H1 (cell line): ENCODE measurements at regions of chr6 and their contacts with region 1.

Region 1: GRCh38 chr6:26223650-26224546 is 136.7 kb downstream of the HFE start:
- DNase-seq: no peak
- H3K4me3 ChIP-seq: peak overlapping the region; percentile 61 to 94 (median 76)
- H3K27ac ChIP-seq: peak overlapping the region; percentile 91
- H3K4me1 ChIP-seq: peaks cover 0 to 7% (median 3%) of the 10 kb centered on the region in 4 experiments; a peak in 5 of 7 replicates
- H3K27me3 ChIP-seq: no peaks in the 10 kb centered on the region
- CTCF ChIP-seq: no peak
- EP300 ChIP-seq: no peak
- POLR2A ChIP-seq: peak; percentile 48 to 76; a peak in 2 of 3 replicates
- RAD21 ChIP-seq: no peak

Region 2: DNA sequence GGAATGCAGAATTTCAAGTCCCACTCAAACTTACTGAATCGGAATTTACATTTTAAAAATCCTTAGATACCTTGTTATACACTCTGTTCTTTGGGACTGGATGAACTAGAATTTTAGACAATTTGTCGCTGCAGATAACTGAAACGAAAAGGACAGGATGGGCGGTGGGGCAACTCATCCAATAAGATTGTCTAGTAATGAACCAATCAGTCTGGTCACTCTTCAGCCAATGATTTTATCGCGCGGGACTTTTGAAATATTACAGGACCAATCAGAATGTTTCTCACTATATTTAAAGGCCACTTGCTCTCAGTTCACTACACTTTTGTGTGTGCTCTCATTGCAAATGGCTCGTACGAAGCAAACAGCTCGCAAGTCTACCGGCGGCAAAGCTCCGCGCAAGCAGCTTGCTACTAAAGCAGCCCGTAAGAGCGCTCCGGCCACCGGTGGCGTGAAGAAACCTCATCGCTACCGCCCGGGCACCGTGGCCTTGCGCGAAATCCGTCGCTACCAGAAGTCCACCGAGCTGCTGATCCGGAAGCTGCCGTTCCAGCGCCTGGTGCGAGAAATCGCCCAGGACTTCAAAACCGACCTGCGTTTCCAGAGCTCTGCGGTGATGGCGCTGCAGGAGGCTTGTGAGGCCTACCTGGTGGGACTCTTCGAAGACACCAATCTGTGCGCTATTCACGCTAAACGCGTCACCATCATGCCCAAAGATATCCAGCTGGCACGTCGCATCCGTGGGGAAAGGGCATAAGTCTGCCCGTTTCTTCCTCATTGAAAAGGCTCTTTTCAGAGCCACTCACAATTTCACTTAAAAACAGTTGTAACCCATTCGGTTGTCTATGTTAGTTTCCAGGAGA is 178.6 kb before region 1 on chr6:
- CTCF ChIA-PET with region 1: no interaction called
- POLR2A ChIA-PET with region 1: interaction called, 10 read pairs
- DNase-seq: no peak
- H3K4me3 ChIP-seq: no peak overlapping the region
- H3K27ac ChIP-seq: 0 out of 2 replicates have a peak overlapping the region, but pooled peaks have one; percentile 22
- H3K4me1 ChIP-seq: peaks cover 0 to 6% (median under 1%) of the 10 kb centered on the region in 4 experiments; a peak in 1 of 7 replicates
- H3K27me3 ChIP-seq: no peaks in the 10 kb centered on the region
- CTCF ChIP-seq: peak in 1 of 3 experiments; percentile 1; a peak in 1 of 4 replicates
- EP300 ChIP-seq: no peak
- POLR2A ChIP-seq: no peak
- RAD21 ChIP-seq: no peak

Region 3: DNA sequence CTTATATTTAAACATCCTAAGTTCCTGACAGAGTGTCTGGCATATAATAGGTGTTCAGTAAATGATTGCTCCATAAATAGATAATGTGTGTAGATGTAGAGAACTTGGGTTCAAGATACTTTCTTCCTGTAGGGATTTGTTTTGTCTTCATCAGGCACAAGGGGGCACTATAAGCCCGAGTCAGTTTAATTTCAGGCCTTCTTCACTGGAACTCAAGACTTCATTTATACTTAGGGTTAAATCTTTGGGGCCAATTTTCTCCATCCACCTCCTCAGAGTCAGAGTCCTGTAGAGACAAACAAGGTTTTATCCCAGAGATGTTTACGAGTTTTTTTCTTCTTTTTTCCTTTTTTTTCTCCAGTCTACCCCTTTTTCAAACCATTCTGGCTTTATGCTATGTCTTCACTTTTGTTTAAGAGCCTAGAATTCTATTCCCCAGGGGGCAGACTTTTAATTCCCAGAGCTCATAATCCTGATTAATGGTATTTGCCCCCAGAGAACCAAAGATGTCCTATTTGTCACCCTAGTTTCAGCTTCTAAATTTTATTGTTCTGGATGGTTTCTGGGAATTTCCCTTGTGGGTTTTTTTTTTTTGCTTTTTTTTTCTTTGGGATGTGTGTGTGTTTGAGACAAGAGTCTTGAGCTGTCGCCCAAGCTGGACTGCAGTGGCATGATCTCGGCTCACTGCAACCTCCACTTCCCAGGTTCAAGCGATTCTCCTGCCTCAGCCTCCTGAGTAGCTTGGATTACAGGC is 48.3 kb before region 1 on chr6:
- CTCF ChIA-PET with region 1: no interaction called
- POLR2A ChIA-PET with region 1: interaction called, 2,060 read pairs
- DNase-seq: peak in 1 of 2 experiments; percentile 54
- H3K4me3 ChIP-seq: 0 out of 8 replicates have a peak overlapping the region, but pooled peaks of 1 of the 4 experiments have one; percentile 14
- H3K27ac ChIP-seq: no peak overlapping the region
- H3K4me1 ChIP-seq: peaks cover 0 to 2% (median 0%) of the 10 kb centered on the region in 4 experiments; a peak in 3 of 7 replicates
- H3K27me3 ChIP-seq: no peaks in the 10 kb centered on the region
- CTCF ChIP-seq: peak in 2 of 3 experiments; percentile 51 to 65; a peak in 2 of 4 replicates
- EP300 ChIP-seq: no peak
- POLR2A ChIP-seq: no peak
- RAD21 ChIP-seq: peak; percentile 79 to 83

Region 4: DNA sequence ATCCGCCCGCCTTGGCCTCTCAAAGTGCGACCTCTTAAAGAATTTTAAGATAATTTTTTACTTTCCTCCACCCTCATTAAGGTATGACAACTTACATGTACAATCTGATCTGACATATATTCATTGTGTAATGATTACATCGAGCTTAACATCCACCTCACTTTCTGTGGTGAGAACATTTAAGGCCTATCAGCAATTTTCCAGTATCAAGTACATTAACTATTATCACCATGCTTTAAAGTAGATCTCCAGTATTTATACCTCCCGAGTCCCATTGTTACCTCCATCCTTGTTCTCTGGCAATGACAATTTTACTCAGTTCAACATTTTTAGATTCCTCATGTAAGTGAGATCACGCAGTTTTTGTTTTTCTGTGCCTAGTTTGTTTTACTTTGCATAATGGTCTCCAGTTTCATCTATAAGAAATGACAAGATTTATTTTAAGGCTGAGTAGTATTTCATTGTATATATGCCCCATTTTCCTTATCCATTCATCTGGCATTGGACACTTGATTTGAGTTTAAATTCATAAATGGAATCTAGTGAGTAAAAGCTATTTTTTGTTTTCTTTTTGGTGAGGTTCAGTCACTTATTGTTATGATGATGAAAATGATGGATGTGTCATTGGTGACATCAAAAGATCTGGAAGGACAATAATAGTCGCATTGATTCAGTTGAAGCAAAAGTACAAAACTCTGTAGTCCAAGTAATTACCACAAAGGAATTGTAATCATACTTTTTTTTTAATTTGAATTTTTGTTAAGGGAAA is 1601.3 kb after region 1 on chr6:
- CTCF ChIA-PET with region 1: no interaction called
- POLR2A ChIA-PET with region 1: interaction called, 12 read pairs
- DNase-seq: no peak
- H3K4me3 ChIP-seq: peak overlapping the region; percentile 59 to 90 (median 81)
- H3K27ac ChIP-seq: peak overlapping the region; percentile 95; the same call in 1 of the 2 replicates
- H3K4me1 ChIP-seq: peaks cover 0 to 3% (median 0%) of the 10 kb centered on the region in 4 experiments; a peak in 1 of 7 replicates
- H3K27me3 ChIP-seq: no peaks in the 10 kb centered on the region
- CTCF ChIP-seq: no peak
- EP300 ChIP-seq: no peak
- POLR2A ChIP-seq: peak in 1 of 2 experiments; percentile 32; a peak in 2 of 3 replicates
- RAD21 ChIP-seq: no peak

Region 5: DNA sequence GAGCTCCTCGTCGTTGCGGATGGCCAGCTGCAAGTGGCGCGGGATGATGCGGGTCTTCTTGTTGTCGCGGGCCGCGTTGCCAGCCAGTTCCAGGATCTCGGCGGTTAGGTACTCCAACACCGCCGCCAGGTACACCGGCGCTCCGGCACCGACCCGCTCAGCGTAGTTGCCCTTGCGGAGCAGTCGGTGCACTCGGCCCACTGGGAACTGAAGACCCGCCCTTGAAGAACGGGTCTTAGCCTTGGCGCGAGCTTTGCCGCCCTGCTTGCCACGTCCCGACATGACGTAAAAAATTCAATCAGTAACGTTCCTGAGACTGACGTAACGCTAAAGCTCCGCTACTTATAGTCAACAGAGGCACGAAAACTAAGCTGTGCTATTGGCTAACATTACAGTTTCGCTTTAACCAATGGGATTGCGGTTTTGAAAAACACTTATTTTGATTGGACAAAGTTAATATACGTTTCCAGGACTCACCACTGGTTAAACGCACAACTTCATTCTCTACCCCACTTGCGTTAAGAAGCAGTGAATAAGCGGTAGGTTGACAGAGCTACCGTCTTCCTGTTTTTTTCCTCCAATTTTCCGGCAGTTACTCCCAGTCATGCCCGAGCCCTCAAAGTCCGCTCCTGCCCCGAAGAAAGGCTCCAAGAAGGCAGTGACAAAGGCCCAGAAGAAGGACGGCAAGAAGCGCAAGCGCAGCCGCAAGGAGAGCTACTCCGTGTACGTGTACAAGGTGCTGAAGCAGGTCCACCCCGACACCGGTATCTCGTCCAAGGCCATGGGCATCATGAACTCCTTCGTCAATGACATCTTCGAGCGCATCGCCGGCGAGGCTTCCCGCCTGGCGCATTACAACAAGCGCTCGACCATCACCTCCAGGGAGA is 1614.4 kb after region 1 on chr6:
- CTCF ChIA-PET with region 1: no interaction called
- POLR2A ChIA-PET with region 1: interaction called, 31 read pairs
- DNase-seq: peak; percentile 76 to 87
- H3K4me3 ChIP-seq: peak overlapping the region; percentile 77 to 96 (median 93)
- H3K27ac ChIP-seq: peak overlapping the region; percentile 98
- H3K4me1 ChIP-seq: peaks cover 0 to 5% (median 2%) of the 10 kb centered on the region in 4 experiments; a peak in 1 of 7 replicates
- H3K27me3 ChIP-seq: no peaks in the 10 kb centered on the region
- CTCF ChIP-seq: no peak
- EP300 ChIP-seq: no peak
- POLR2A ChIP-seq: peak; percentile 88 to 91
- RAD21 ChIP-seq: no peak

Region 6: DNA sequence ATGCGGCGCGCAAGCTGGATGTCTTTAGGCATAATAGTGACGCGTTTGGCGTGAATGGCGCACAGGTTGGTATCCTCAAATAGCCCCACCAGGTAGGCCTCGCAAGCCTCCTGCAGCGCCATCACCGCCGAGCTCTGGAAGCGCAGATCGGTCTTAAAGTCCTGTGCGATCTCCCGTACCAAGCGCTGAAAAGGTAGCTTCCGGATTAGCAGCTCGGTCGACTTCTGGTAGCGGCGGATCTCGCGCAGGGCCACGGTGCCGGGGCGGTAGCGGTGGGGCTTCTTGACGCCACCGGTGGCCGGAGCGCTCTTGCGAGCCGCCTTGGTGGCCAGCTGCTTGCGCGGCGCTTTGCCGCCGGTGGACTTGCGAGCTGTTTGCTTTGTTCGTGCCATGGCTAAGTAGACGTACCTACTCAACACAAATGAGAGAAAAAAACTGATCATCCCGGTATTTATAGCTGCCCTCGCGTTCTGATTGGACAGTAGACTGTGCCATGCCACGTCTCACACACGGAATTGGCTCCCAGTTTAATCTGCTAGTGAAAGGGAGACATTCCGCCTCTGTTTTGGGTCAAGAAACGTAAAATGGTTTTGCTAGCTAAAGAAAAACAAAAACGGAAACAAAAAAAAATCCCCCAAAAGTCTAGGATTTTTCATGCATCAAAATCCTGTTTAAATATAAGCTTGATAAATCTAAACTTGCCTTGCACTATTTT is 1648.2 kb after region 1 on chr6:
- CTCF ChIA-PET with region 1: no interaction called
- POLR2A ChIA-PET with region 1: interaction called, 119 read pairs
- DNase-seq: peak in 1 of 2 experiments; percentile 89
- H3K4me3 ChIP-seq: peak overlapping the region; percentile 61 to 73 (median 67)
- H3K27ac ChIP-seq: peak overlapping the region; percentile 96
- H3K4me1 ChIP-seq: peaks cover 0 to 16% (median 9%) of the 10 kb centered on the region in 4 experiments; a peak in 5 of 7 replicates
- H3K27me3 ChIP-seq: no peaks in the 10 kb centered on the region
- CTCF ChIP-seq: peak in 2 of 3 experiments; percentile 22 to 26; a peak in 3 of 4 replicates
- EP300 ChIP-seq: no peak; a peak in 1 of 3 replicates
- POLR2A ChIP-seq: peak; percentile 97 to 98
- RAD21 ChIP-seq: no peak